Calu3 (cell line): ENCODE measurements at regions of chr3 and their contacts with region 1.

Region 1: DNA sequence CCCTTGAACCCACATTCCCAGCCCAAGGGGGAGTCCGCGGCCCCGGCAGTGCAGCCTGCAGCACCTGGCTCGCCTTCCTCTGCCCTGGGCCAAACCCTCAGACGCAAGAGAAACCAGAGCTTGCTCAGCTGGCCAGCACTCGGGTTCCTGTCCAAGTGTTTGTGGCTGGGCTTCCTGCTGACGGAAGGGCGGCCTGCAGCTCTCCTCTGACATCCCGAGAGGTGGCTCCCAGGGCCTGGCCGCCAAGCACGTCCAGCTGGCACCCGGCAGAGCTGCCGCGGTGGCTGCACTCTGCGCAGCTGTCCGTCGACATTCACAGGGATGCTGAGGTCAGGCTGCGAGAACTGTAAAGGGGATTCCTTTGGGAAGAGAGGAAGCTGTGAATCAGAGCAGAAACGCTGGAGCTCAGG is 85.6 kb downstream of the CPN2 start:
- DNase-seq: no peak
- H3K4me3 Mint-ChIP-seq: no peak overlapping the region
- H3K27ac Mint-ChIP-seq: no peak overlapping the region
- H3K4me1 Mint-ChIP-seq: peaks cover 31% of the 10 kb centered on the region
- H3K27me3 Mint-ChIP-seq: no peaks in the 10 kb centered on the region
- CTCF ChIP-seq: no peak

Region 2: GRCh38 chr3:194023501-194024280 is 241.8 kb before region 1 on chr3:
- CTCF ChIA-PET with region 1: no interaction called
- intact Hi-C with region 1: no loop called
- DNase-seq: no peak
- H3K4me3 Mint-ChIP-seq: no peak overlapping the region
- H3K27ac Mint-ChIP-seq: no peak overlapping the region
- H3K4me1 Mint-ChIP-seq: peaks cover 40% of the 10 kb centered on the region
- H3K27me3 Mint-ChIP-seq: no peaks in the 10 kb centered on the region
- CTCF ChIP-seq: no peak

Region 3: DNA sequence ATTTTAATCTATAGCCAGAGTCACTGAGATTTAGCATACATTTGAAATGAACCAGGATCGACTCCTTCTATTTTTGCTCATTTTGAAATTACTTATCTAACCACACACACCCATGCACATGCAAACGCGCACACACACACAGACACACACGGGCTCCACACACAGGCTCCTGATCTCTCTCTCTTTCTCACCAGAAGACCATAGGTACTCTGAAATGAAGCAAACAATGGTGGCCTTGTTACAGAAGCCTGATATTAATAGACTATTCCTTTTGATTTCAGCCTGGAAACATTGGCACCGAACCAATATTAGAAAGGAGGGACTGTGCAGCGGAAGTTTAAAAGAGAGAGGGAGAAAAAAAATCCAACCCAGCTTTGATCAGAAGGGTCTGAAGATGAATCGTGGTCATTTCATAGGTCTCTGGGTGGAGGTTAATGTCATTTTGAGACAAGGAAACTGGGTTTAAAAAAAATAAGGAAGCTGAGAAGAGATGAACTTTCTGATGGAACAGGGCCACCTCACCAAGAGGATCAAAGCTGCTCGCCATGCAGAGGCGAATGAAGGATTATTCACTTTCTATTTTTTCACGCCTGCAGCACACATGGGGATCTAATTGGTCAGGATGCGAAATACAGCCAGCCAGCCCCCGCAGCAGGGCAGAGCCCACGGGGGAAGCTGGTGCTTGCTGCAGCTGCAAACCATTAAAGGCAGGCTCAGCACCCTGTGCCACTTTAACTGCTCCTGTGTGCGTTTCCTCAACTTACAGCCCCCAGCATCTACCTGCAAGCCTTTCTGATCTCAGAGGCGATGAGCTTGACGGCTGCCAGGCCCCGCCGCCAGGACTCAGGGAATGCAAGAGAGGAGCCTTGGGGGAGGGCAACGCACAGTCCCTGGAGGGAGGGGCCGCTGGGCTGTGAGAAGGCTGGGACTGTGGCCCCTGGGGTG is 40.7 kb before region 1 on chr3:
- CTCF ChIA-PET with region 1: no interaction called
- intact Hi-C with region 1: no loop called
- DNase-seq: no peak
- H3K4me3 Mint-ChIP-seq: no peak overlapping the region
- H3K27ac Mint-ChIP-seq: no peak overlapping the region
- H3K4me1 Mint-ChIP-seq: peaks cover 20% of the 10 kb centered on the region
- H3K27me3 Mint-ChIP-seq: peaks cover 28% of the 10 kb centered on the region
- CTCF ChIP-seq: no peak

Region 4: DNA sequence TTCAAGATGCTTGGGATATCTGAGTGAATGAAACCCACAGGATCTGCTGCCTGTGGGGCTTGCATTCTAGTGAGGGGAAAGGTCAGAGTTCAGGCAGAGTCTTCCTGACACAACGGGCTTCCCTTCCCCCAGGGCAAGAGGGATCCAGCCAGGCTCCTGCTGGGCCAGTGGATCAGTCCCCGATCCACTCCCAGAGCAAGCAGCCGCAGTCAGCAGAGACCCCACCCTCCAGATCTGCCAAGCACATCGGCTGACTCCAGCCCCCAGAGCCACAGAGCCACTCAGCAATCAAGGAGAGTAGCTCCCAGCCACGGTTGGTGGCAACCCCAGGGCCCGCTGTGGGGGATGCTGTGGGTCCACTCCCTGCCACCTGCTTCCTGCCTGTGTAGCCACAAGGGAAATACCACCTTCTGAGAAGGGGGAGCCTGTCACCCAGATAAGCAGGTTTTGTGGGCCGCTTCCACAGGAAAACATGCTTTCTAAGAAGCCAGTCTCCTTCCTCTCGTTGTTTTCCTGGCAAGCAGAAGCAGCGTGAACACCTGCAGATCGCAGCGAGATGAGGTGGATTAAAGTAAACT is 40.7 kb after region 1 on chr3:
- CTCF ChIA-PET with region 1: interaction called, 3 read pairs
- intact Hi-C with region 1: loop called (anchors 5 kb)
- DNase-seq: no peak
- H3K4me3 Mint-ChIP-seq: no peak overlapping the region
- H3K27ac Mint-ChIP-seq: no peak overlapping the region
- H3K4me1 Mint-ChIP-seq: peaks cover 8% of the 10 kb centered on the region
- H3K27me3 Mint-ChIP-seq: no peaks in the 10 kb centered on the region
- CTCF ChIP-seq: no peak